ENCODE measurements at regions of chr2 and their contacts with region 1.

Region 1: DNA sequence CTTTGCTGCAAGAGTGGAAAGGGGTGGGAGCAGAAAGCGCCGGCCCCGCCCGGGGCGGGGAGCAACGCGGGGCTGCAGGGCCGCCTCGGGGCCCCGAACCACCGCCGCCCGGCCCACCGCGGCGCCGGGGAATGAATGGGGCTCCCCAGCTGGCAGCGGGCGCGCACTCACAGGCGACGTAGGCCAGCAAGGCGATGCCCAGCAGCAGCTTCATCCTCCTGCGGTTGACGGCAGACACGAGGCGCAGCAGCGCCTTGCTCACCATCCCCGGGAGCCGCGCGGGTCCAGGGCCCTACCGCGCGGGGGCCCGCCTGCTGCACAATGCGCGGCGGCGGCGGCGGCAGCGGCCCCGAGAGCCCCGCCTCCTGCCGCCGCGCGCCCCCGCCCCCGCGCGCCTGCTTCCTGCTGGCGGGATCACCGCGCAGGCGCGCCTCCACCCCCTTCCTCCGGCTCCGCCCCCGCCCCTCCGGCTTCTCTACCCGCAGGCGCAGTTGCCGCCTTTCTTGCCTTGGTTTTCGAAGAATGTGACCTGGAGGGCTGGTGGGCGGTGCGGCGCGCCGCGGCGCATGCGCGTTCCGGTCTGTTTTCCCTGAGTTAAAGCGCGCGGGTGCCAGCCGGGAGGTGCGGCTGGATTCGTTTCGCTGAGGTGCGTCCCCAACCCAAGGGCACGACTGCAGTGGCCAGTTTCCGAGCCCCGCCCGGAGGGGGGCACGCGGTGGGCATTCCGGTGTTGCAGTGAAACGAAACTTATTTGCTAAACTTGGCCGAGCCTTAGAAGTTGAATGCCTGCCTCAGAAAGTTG is at the start of gene UXS1:
- DNase-seq: peak; percentile 96
- ATAC-seq: peak; percentile 80
- H3K4me3 ChIP-seq: peak within 1 kb of the TSS; percentile 90
- H3K27ac ChIP-seq: peak within 1 kb of the TSS; percentile 94
- H3K4me1 ChIP-seq: peaks cover 13% of the 10 kb centered on the region
- H3K27me3 ChIP-seq: no peaks in the 10 kb centered on the region
- CTCF ChIP-seq: no peak
- POLR2A ChIP-seq: peak; percentile 55
- RAD21 ChIP-seq: no peak
- total RNA-seq, gene UXS1: 24.7 and 33.7 TPM in 2 replicates

Region 2: GRCh38 chr2:105576440-105577252 is 617.5 kb before region 1 on chr2:
- CTCF ChIA-PET with region 1: no interaction called
- POLR2A ChIA-PET with region 1: no interaction called
- dilution Hi-C with region 1: no loop called
- in situ Hi-C with region 1: no loop called
- intact Hi-C with region 1: loop called (anchors 10 kb)
- DNase-seq: peak; percentile 42
- ATAC-seq: peak; percentile 77
- H3K4me3 ChIP-seq: no peak overlapping the region
- H3K27ac ChIP-seq: no peak overlapping the region
- H3K4me1 ChIP-seq: peaks cover 4% of the 10 kb centered on the region; the same call in 1 of the 2 replicates
- H3K27me3 ChIP-seq: peaks cover 22% of the 10 kb centered on the region
- CTCF ChIP-seq: peak; percentile 49
- POLR2A ChIP-seq: no peak
- RAD21 ChIP-seq: peak; percentile 54

Region 3: DNA sequence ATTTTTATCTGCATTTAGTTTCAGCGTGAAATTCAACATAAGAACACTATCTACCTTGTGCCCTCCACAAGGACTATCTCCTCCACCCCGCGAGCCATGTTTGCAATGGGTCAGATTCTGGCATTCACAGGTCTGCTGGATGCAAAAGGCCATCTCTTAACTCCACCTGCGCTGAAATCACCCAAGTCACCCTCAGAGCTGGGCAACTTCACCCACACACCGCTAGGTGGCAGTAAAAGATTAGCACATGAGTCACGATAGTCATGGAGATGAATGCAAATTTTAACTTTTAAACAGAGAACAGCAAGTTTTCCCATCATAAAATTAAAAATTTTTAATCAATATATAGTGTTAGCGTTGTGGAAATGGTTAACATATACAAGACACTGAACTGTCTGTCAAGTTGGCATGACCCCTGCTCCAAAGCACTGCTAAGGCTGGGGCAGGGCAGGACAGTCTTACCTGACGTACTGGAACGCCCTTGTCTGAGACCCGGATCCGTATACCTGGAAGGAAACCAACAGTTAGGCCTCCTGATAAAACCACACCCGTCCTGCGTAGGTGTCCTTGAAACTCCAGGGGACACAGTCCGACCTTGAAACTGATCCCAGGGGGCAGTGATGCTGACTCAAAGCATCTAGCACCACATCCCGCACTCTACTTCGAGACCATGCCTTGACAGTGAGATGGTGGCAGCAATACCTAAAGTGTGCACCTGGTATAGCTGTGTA is 89.7 kb before region 1 on chr2:
- CTCF ChIA-PET with region 1: interaction called, 4 read pairs
- POLR2A ChIA-PET with region 1: no interaction called
- dilution Hi-C with region 1: no loop called
- in situ Hi-C with region 1: no loop called
- intact Hi-C with region 1: loop called (anchors 5 kb)
- DNase-seq: peak; percentile 66
- ATAC-seq: peak; percentile 86
- H3K4me3 ChIP-seq: no peak overlapping the region
- H3K27ac ChIP-seq: no peak overlapping the region
- H3K4me1 ChIP-seq: no peaks in the 10 kb centered on the region
- H3K27me3 ChIP-seq: no peaks in the 10 kb centered on the region
- CTCF ChIP-seq: peak; percentile 94
- POLR2A ChIP-seq: 0 out of 2 replicates have a peak, but pooled peaks have one; percentile 49
- RAD21 ChIP-seq: peak; percentile 97

Region 4: GRCh38 chr2:106124905-106125405 is 69.2 kb before region 1 on chr2:
- CTCF ChIA-PET with region 1: no interaction called
- POLR2A ChIA-PET with region 1: no interaction called
- dilution Hi-C with region 1: no loop called
- in situ Hi-C with region 1: no loop called
- intact Hi-C with region 1: loop called (anchors 5 kb)
- DNase-seq: no peak
- ATAC-seq: no peak
- H3K4me3 ChIP-seq: no peak overlapping the region
- H3K27ac ChIP-seq: no peak overlapping the region
- H3K4me1 ChIP-seq: peaks cover 6% of the 10 kb centered on the region; the same call in 1 of the 2 replicates
- H3K27me3 ChIP-seq: no peaks in the 10 kb centered on the region
- CTCF ChIP-seq: no peak
- POLR2A ChIP-seq: no peak
- RAD21 ChIP-seq: no peak

Region 5: DNA sequence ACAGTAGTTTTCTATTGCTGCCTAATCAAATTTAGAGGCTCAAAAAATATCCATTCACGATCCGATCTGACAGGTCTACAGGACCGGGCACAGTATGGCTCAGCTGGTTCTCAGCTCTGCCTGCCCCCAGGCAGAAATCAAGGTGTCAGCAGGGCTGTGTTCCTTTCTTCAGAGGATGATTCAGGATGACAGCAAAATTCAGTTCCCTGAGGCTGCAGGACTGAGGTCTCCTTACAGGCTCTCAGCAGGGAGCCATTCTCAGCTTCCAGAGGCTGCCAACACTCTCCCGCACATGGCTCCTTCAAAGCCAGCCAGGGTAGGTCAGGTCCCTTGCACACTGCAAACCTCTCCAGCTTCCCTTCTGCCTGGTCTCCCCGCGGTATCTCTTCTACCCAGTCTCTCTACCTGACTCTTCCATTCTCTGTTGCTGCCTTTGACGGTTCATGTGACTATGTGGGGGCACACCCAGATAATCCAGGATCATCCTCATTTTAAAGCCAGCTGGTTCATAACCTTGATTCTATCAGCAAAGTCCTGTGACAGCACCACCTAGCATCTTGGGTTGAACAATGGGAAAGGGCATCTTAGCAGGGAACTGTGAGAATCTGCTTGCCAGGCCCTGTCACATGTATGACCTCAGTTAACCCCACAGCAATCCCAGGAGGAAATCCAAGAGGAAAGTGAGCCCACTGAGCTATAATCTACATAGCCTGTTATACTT is 50.5 kb before region 1 on chr2:
- CTCF ChIA-PET with region 1: no interaction called
- POLR2A ChIA-PET with region 1: no interaction called
- dilution Hi-C with region 1: no loop called
- in situ Hi-C with region 1: no loop called
- intact Hi-C with region 1: loop called (anchors 5 kb)
- DNase-seq: no peak
- ATAC-seq: no peak
- H3K4me3 ChIP-seq: no peak overlapping the region
- H3K27ac ChIP-seq: no peak overlapping the region
- H3K4me1 ChIP-seq: peaks cover 18% of the 10 kb centered on the region
- H3K27me3 ChIP-seq: no peaks in the 10 kb centered on the region
- CTCF ChIP-seq: no peak
- POLR2A ChIP-seq: no peak
- RAD21 ChIP-seq: no peak

Measured in IMR-90 (cell line).